Activated naive CD4-positive, alpha-beta T cell treated with anti-CD3 and anti-CD28 coated beads for 36 hours (primary cell): ENCODE measurements at regions of chr14 and their contacts with region 1.

Region 1: DNA sequence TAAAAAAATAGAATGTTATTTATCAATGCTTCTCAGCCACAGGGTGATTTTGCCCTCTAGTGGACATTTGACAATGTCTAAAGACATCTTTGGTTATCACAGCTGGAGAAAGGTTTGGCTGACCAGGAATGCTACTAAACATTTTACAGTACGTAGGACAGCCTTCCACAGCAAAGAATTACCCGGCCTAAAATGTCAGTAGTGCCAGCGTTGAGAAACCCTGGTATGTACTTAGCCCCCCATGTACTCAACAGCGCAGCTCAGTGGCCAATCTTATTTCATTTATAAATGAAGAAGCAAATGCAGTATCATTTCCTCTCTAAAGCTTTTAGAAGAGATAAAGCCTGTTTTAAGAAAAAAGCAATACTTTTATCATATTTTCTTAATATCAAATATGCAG is 5.8 kb downstream of the MARK3 start:
- DNase-seq: peak; percentile 64
- H3K4me3 Mint-ChIP-seq: no peak overlapping the region
- H3K27ac Mint-ChIP-seq: peak overlapping the region; percentile 56
- H3K4me1 Mint-ChIP-seq: peaks cover 61% of the 10 kb centered on the region
- H3K27me3 Mint-ChIP-seq: no peaks in the 10 kb centered on the region

Region 2: GRCh38 chr14:103378038-103378854 is 12.8 kb before region 1 on chr14:
- CTCF ChIA-PET with region 1: interaction called, 12 read pairs
- intact Hi-C with region 1: no loop called
- DNase-seq: no peak
- H3K4me3 Mint-ChIP-seq: no peak overlapping the region
- H3K27ac Mint-ChIP-seq: no peak overlapping the region
- H3K4me1 Mint-ChIP-seq: peaks cover 12% of the 10 kb centered on the region
- H3K27me3 Mint-ChIP-seq: peaks cover 4% of the 10 kb centered on the region

Region 3: DNA sequence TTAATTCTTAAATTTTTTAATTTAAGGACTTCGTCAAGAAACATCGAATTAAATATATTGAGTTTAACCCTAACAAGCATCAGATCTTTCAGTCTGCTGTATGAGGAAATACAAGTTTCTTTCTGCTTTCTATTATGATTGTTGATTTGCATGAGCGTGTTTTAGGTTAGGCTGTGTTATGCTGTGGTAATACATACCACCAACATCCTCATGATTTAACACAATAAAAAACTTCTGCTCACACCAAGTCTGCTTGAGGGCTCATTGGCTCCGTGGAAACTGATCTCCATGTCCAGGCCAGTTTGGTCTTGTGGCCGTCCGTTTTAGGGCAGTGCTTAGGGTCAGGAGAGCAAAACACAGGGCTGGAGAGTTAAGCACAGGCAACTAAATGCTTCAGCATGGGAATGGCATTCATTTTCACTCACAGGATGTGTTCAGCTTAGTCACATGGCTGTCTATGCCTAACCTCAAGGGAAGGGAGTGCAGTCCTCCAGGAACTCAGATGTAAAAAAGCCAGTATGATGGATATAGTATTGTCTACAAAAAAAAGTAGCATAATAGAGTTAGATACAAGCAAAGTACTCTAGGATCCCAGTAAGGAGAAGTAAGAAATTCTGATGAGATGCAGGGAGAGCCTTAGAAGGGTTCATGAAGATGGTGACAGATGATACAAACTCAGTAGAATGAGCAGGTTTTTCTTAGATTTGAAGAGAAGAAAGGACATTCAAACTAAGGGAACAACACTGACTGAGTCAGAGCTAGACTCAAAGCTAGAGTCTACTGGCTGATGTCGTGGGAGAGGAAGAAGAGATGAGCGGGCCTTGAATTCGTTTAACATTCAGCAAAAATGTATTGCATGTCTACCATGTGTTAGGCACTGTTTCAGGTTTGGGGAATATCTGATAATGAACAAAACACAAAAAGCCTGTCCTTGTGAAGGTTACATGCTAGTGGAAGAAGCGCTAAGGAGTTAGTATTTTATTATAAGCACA is 10.5 kb after region 1 on chr14:
- CTCF ChIA-PET with region 1: interaction called, 15 read pairs
- intact Hi-C with region 1: no loop called
- DNase-seq: peak; percentile 36
- H3K4me3 Mint-ChIP-seq: no peak overlapping the region
- H3K27ac Mint-ChIP-seq: peak overlapping the region; percentile 59
- H3K4me1 Mint-ChIP-seq: peaks cover 65% of the 10 kb centered on the region
- H3K27me3 Mint-ChIP-seq: no peaks in the 10 kb centered on the region

Region 4: GRCh38 chr14:103416916-103417315 is 25.9 kb after region 1 on chr14:
- CTCF ChIA-PET with region 1: interaction called, 44 read pairs
- intact Hi-C with region 1: no loop called
- DNase-seq: no peak
- H3K4me3 Mint-ChIP-seq: no peak overlapping the region
- H3K27ac Mint-ChIP-seq: no peak overlapping the region
- H3K4me1 Mint-ChIP-seq: peaks cover 39% of the 10 kb centered on the region
- H3K27me3 Mint-ChIP-seq: no peaks in the 10 kb centered on the region

Region 5: DNA sequence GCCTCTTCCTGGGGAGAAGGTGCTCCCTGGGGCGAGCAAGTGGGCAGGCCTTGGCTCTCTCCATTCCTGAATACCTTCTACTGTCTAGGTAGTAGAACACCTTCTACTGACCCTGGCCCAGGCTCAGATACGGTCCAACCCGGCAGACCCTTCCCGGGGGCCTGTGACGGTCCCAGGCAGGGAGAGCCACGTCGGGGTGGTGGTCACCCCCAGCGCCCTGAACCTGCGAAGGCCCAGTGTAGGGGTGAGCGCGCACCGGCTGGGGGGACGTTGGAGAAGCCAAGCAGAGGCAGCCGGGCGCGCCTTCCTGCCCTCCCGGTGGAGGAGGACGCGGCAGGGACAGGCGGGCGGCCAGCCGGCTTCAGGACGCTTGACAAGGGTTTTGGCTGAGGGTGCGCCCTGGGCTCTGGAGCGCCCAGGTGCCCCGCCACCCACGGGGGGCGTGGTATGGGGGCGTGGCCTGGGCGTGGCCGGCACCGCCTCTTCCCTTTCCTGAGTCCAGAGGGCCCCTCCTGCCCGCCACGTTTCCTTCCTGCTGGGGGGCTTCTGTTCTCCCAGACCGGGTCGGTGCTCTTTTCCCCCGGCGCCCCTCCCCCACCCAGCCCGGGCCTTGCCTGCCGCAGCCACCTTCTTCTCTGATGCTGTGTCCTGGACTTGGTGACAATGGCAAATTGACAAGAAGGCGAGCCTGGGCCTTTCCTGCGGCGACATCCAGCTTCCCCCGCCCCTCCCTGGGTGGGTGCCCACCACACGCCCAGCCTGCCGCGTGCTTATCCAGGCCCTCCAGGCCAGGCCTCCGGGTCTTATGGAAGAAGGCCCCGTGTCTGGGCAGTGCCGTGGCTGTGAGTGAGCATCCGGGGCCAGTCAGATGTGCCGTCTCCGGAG is 480.8 kb after region 1 on chr14:
- CTCF ChIA-PET with region 1: no interaction called
- intact Hi-C with region 1: no loop called
- DNase-seq: peak; percentile 77
- H3K4me3 Mint-ChIP-seq: peak overlapping the region; percentile 77
- H3K27ac Mint-ChIP-seq: peak overlapping the region; percentile 54
- H3K4me1 Mint-ChIP-seq: peaks cover 8% of the 10 kb centered on the region
- H3K27me3 Mint-ChIP-seq: no peaks in the 10 kb centered on the region